ENCODE measurements at regions of chr17 and their contacts with region 1.

Region 1: DNA sequence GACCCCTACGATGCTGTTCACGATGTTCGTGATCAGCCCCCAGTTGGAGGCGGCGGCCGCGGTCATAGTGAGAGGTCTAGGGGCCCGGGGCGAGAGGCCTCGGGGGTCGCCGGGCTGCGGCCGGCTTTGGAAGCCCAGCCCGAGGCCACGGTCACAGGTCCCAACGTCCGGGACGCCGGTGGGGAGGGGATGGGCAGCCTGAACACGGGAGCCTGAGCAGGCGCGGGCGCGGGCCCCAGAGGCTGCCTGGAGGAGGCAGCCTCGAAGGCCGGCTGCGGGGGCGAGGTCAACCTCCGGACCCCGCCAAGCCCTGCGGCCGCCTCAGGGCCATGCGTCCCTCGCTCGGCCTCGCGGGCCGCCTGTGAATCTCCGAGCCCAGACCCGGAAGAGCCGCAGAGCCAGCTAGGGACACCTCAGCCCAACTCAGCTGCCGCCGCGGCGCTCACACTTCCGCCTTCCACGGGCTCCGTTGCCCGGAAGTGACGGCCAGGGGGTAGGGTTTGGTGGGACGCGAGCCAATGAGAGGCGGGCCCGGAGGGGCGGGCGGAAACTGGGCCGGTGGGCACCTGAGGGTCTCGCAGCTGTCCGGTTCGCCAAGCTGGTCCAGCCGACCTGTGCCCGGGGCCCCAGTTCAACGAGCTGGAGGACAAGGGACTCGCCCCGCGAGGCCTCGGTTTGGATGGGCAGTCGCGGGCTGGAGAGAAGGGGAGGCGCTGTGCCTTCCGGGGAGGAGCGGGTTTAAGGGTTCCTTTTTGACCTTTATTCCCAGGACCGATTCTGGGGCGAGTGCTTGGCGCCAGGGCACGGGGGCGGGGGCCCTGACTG is at the start of gene SLC38A10:
- DNase-seq: peak; percentile 94
- ATAC-seq: peak; percentile 95
- H3K4me3 Mint-ChIP-seq: peak within 1 kb of the TSS; percentile 94
- H3K27ac Mint-ChIP-seq: peak within 1 kb of the TSS; percentile 96
- H3K4me1 Mint-ChIP-seq: peaks cover 38% of the 10 kb centered on the region
- H3K27me3 Mint-ChIP-seq: peaks cover 3% of the 10 kb centered on the region
- total RNA-seq, gene SLC38A10: 78.5 to 83.5 TPM

Region 2: DNA sequence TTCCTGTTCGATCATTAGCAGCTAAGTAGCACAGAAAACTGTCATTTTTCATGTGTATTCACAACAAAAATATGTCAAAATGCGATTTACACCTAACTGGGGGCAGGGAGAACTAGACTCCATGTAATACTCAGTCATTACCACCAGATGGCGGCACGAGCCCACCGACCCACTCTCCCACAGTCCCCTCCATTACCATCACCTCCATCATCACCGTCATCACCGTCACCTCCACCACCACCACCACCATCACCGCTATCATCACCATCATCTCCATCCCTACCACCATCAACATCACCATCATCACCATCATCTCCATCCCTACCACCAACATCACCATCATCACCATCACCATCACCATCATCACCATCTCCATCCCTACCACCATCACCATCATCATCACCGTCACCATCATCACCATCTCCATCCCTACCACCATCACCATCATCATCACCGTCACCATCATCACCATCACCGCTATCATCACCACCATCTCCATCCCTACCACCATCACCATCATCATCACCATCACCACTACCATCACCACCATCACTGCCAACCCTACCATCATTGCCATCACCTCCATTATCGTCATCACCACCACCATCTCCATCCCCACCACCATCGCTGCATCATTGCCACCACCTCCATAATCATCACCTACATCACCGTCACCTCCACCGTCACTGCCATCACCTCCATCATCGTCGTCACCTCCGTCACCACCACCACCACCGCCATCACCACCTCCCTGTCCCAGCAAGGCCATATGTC is 41.5 kb before region 1 on chr17:
- CTCF ChIA-PET with region 1: interaction called, 16 read pairs
- POLR2A ChIA-PET with region 1: no interaction called
- DNase-seq: peak; percentile 67
- ATAC-seq: peak; percentile 50
- H3K4me3 Mint-ChIP-seq: no peak overlapping the region
- H3K27ac Mint-ChIP-seq: peak overlapping the region; percentile 3
- H3K4me1 Mint-ChIP-seq: peaks cover 11% of the 10 kb centered on the region
- H3K27me3 Mint-ChIP-seq: no peaks in the 10 kb centered on the region

Region 3: GRCh38 chr17:81419328-81419885 is 124.3 kb after region 1 on chr17:
- CTCF ChIA-PET with region 1: no interaction called
- POLR2A ChIA-PET with region 1: no interaction called
- DNase-seq: no peak
- ATAC-seq: no peak
- H3K4me3 Mint-ChIP-seq: no peak overlapping the region
- H3K27ac Mint-ChIP-seq: no peak overlapping the region
- H3K4me1 Mint-ChIP-seq: no peaks in the 10 kb centered on the region
- H3K27me3 Mint-ChIP-seq: peaks cover 4% of the 10 kb centered on the region

Measured in activated CD8-positive, alpha-beta T cell treated with anti-CD3 and anti-CD28 coated beads, Interleukin-2, amount 10 ng/mL, durations not matched to agents 7 days and 5 days (primary cell).